CD4-positive, alpha-beta memory T cell (primary cell): ENCODE measurements at regions of chr11 and their contacts with region 1.

Region 1: DNA sequence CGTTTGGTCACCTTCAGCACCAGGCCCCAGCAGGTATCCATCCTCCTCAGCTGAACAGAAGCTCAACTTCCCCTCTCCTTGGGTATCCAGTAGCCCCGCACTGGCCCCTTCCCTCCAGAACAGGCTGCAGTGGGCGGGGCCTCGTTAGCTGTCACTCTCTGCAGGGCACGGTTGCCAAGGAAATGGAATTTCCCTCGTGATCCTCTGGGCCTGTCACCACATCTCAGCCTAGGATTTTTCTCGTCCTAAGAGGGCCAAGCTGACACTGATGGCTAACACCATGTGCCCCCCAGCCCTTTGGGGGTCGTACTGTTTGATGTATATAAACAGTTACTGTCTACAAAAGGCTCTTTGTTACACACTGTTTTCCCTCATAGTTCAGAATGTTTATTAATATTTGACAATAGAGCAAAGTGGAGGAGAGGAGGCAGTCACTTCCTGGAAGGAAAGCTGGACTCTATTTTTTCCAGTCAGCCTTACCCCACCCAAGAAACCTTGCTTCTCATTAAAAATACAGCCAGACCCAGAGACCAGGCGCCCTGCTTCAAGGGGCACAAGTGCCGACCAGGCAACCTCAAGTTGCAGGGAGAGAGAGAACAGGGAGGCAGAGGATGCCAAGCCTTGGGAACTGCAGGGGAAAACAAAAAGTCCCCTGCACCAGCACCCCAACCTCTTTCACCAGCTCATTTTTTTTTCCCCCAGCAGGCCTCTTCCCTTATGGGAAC is 44.5 kb downstream of the FEZ1 start:
- DNase-seq: no peak
- H3K4me3 ChIP-seq: no peak overlapping the region
- H3K4me3 Mint-ChIP-seq: peak overlapping the region in 1 of 8 donors; percentile 10
- H3K27ac ChIP-seq: no peak overlapping the region
- H3K27ac Mint-ChIP-seq: peak overlapping the region in 2 of 7 donors; percentile 2 to 61
- H3K4me1 ChIP-seq: no peaks in the 10 kb centered on the region
- H3K4me1 Mint-ChIP-seq: peaks cover 0 to 7% (median 2%) of the 10 kb centered on the region in 4 donors
- H3K27me3 ChIP-seq: no peaks in the 10 kb centered on the region
- H3K27me3 Mint-ChIP-seq: peaks cover 0 to 4% of the 10 kb centered on the region in 2 donors

Region 2: GRCh38 chr11:125435461-125436238 is 15.9 kb before region 1 on chr11:
- CTCF ChIA-PET with region 1: interaction called, 12 read pairs
- POLR2A ChIA-PET with region 1: no interaction called
- intact Hi-C with region 1: no loop called
- DNase-seq: no peak
- H3K4me3 ChIP-seq: no peak overlapping the region
- H3K4me3 Mint-ChIP-seq: no peak overlapping the region
- H3K27ac ChIP-seq: no peak overlapping the region
- H3K27ac Mint-ChIP-seq: no peak overlapping the region
- H3K4me1 ChIP-seq: no peaks in the 10 kb centered on the region
- H3K4me1 Mint-ChIP-seq: peaks cover 0 to 5% (median 2%) of the 10 kb centered on the region in 4 donors
- H3K27me3 ChIP-seq: peaks cover 3% of the 10 kb centered on the region
- H3K27me3 Mint-ChIP-seq: peaks cover 18 to 29% of the 10 kb centered on the region in 2 donors

Region 3: DNA sequence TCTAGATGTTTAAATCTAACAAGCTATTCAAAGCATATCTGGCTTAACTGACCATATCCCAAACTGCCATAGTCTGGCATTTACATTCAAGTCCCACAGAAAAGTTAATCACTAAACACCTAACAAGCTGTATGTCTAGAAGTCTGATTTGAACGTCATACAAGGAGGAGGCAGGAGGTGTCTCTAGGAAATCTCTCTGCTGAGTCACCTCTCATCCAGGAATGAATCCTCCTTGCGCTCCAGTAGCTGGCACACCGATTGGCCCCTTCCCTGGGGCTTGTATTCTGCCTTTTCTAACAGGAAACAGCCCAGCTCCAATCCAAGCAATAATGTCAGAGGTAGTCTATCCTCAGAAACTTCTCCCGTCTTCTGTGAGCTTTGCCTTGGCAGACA is 12.7 kb after region 1 on chr11:
- CTCF ChIA-PET with region 1: interaction called, 16 read pairs
- POLR2A ChIA-PET with region 1: no interaction called
- intact Hi-C with region 1: no loop called
- DNase-seq: no peak
- H3K4me3 ChIP-seq: no peak overlapping the region
- H3K4me3 Mint-ChIP-seq: no peak overlapping the region
- H3K27ac ChIP-seq: no peak overlapping the region
- H3K27ac Mint-ChIP-seq: no peak overlapping the region
- H3K4me1 ChIP-seq: no peaks in the 10 kb centered on the region
- H3K4me1 Mint-ChIP-seq: no peaks in the 10 kb centered on the region
- H3K27me3 ChIP-seq: no peaks in the 10 kb centered on the region
- H3K27me3 Mint-ChIP-seq: peaks cover 12 to 14% of the 10 kb centered on the region in 2 donors